Activated CD4-positive, alpha-beta memory T cell treated with anti-CD3 and anti-CD28 coated beads, Interleukin-2, amount 10 ng/mL, durations not matched to agents 7 days and 5 days (primary cell): ENCODE measurements at regions of chr14 and their contacts with region 1.

Region 1: DNA sequence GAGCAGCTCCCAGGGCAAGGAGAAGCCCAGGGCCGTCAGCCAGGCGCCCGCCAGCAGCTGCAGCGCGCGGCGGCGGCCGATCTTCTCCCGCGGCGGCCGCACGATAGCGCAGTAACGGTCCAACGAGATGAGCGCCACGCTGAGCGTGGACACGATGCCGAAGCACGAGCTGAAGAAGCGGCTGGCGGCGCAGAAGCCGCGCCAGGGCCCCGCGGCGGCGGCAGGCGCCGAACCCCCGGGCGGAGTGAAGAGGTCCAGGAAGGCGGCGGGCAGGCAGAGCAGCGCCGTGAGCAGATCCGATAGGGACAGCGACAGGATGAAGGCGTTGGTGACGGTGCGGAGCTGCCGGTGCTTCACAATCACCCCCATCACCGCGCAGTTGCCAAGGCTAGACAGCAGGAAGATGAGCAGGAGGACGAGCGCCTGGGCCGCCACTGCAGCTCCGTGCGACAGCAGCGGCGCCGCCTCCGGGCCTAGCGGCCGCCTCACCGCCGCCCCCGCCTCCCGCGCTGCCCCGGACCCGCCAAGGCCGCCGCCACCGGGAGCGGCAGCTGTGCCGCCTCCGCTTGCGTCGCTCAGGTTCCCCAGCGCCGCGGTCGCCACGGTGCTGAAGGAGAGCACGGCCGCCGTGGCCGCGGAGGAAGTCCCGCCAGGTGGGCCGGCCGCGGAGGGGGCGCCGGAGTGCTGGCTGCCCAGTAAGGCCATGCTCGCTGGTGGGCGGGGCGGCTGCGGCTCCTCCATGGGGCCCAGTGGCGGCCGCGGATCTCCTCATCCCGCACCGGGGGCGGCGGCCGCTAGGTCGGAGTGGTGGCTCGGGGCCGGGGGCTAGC is 479 bp downstream of the GPR135 start:
- DNase-seq: peak; percentile 60
- H3K4me3 Mint-ChIP-seq: peak overlapping the region; percentile 79
- H3K27ac Mint-ChIP-seq: no peak overlapping the region
- H3K4me1 Mint-ChIP-seq: peaks cover 12% of the 10 kb centered on the region
- H3K27me3 Mint-ChIP-seq: peaks cover 1% of the 10 kb centered on the region

Region 2: DNA sequence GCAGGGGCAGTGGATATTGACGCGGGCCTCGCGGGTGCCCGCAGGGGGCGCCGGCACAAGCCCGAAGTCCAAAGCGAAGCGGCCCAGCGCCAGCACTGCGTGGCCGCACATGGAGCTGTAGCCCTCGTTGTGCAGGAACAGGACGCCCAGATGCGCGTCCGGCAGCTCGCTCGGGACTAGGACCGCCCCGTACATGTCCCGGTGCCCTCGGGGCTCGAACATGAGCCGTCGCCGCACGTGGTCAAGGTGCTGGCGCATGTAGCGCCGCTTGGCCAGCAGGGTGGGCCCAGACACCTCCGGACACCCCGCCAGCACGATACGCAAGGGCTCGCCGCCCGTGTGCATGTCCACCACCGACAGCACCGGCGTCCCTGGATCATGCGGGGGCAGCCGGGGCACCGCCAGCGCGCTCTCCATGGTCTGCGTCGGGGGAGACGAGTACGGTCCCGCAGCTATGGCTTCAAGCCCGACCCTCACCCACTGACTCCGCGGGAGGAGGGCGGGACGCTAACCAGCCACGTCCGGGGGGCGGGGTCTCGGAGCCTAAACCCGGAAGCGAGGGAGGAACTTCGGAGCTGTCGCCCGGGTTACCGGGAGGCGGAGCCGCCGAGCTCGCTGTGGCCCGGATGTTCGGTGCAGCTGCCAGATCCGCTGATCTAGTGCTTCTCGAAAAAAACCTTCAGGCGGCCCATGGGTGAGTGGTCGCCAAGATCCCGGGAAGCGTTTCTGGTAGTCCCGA is 19.4 kb after region 1 on chr14 and contains the starts of genes JKAMP and L3HYPDH:
- CTCF ChIA-PET with region 1: interaction called, 3 read pairs
- POLR2A ChIA-PET with region 1: interaction called, 15 read pairs
- DNase-seq: peak; percentile 97
- H3K4me3 Mint-ChIP-seq: peak within 1 kb of the TSS; percentile 94
- H3K27ac Mint-ChIP-seq: peak within 1 kb of the TSS; percentile 88
- H3K4me1 Mint-ChIP-seq: peaks cover 67% of the 10 kb centered on the region
- H3K27me3 Mint-ChIP-seq: no peaks in the 10 kb centered on the region
- total RNA-seq, gene JKAMP: 31.1 to 31.5 TPM
- total RNA-seq, gene L3HYPDH: 15.6 to 17.4 TPM